Body of pancreas (tissue), 4 donors: ENCODE measurements at regions of chr5 and their contacts with region 1.

Region 1: GRCh38 chr5:759111-759751 is 25.3 kb downstream of the ZDHHC11B start:
- DNase-seq: peak; percentile 77 to 92 (median 82)
- ATAC-seq: peak; percentile 95
- H3K4me3 ChIP-seq: no peak overlapping the region
- H3K27ac ChIP-seq: peak overlapping the region in 3 of 4 donors; percentile 34 to 44 (median 41)
- H3K4me1 ChIP-seq: peaks cover 22% of the 10 kb centered on the region
- H3K27me3 ChIP-seq: no peaks in the 10 kb centered on the region
- CTCF ChIP-seq: peak in 1 of 7 experiments; percentile 25
- POLR2A ChIP-seq: no peak

Region 2: DNA sequence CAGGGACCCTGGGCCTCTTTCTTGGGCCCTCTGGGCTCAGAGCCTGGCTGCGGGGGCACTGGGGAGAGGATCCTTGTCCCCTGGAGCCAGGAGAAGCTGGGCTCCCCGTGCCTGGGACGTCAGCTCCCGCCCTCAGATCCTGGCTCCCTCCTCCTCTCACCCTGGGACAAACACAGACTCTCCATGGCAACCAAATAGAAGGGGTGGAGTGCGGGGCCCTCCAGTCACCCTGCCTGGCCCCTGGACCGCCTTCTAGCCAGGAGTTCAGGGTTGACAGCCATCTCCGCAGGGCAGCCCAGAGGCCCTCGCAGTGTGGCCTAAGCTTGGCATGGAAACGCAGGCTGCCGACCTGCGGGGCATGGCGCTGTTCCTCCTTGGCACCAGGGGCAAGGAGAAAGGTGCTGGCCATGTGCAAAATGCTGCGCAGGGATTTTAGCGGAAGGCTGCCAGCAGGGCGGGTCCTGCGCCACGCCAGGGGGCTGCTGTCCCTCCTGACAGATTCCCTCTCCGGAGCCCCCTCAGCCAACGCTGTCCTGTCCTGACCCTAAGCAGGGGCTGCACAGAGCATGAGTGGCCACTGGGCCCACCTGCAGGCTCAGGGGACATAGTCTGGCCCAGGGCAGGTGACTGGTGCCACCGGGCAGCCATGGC is 90.5 kb after region 1 on chr5:
- intact Hi-C with region 1: loop called (anchors 5 kb)
- DNase-seq: no peak
- ATAC-seq: peak; percentile 33
- H3K4me3 ChIP-seq: no peak overlapping the region
- H3K27ac ChIP-seq: no peak overlapping the region
- H3K4me1 ChIP-seq: no peaks in the 10 kb centered on the region
- H3K27me3 ChIP-seq: no peaks in the 10 kb centered on the region
- CTCF ChIP-seq: no peak
- POLR2A ChIP-seq: no peak